Psoas muscle (tissue), 8 donors: ENCODE measurements at regions of chr19 and their contacts with region 1.

Region 1: GRCh38 chr19:48206397-48207093 is 36.1 kb downstream of the ZSWIM9 start:
- DNase-seq: no peak
- ATAC-seq: no peak
- H3K4me3 ChIP-seq: no peak overlapping the region
- H3K27ac ChIP-seq: no peak overlapping the region
- H3K4me1 ChIP-seq: peaks cover 8% of the 10 kb centered on the region
- H3K27me3 ChIP-seq: no peaks in the 10 kb centered on the region
- CTCF ChIP-seq: no peak

Region 2: DNA sequence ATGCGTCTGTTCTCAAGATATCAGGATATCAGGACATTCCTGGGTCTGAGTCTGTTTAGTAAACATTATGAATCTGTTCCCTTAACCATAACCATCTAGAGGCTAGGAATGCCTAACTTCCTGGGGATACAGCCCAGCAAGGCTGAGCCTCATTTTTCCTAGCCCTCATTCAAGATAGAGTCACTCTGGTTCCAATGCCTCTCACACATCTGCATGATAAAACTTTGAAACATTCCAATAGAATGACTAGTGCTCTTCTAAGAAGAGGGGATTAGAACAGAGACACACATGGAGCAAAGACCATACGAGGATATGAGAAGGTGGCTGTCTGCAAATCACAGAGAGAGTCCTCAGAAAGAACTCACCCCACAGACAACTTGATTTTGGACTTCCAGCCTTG is 142.0 kb before region 1 on chr19:
- intact Hi-C with region 1: no loop called
- DNase-seq: no peak
- ATAC-seq: no peak
- H3K4me3 ChIP-seq: no peak overlapping the region
- H3K27ac ChIP-seq: no peak overlapping the region
- H3K4me1 ChIP-seq: no peaks in the 10 kb centered on the region
- H3K27me3 ChIP-seq: no peaks in the 10 kb centered on the region
- CTCF ChIP-seq: no peak

Region 3: GRCh38 chr19:48149430-48149829 is 57.1 kb before region 1 on chr19:
- intact Hi-C with region 1: no loop called
- DNase-seq: no peak
- ATAC-seq: no peak
- H3K4me3 ChIP-seq: no peak overlapping the region
- H3K27ac ChIP-seq: no peak overlapping the region
- H3K4me1 ChIP-seq: no peaks in the 10 kb centered on the region
- H3K27me3 ChIP-seq: no peaks in the 10 kb centered on the region
- CTCF ChIP-seq: no peak

Region 4: GRCh38 chr19:48249502-48250014 is 43.0 kb after region 1 on chr19:
- intact Hi-C with region 1: loop called in 1 of 2 experiments (anchors 5 kb)
- DNase-seq: peak; percentile 34 to 59
- ATAC-seq: peak in 3 of 4 donors; percentile 53 to 62 (median 61)
- H3K4me3 ChIP-seq: peak overlapping the region; percentile 56
- H3K27ac ChIP-seq: peak overlapping the region; percentile 48
- H3K4me1 ChIP-seq: peaks cover 9% of the 10 kb centered on the region
- H3K27me3 ChIP-seq: no peaks in the 10 kb centered on the region
- CTCF ChIP-seq: no peak